Activated CD8-positive, alpha-beta T cell treated with anti-CD3 and anti-CD28 coated beads, Interleukin-2, amount 10 ng/mL, durations not matched to agents 7 days and 5 days (primary cell): ENCODE measurements at regions of chr2 and their contacts with region 1.

Region 1: DNA sequence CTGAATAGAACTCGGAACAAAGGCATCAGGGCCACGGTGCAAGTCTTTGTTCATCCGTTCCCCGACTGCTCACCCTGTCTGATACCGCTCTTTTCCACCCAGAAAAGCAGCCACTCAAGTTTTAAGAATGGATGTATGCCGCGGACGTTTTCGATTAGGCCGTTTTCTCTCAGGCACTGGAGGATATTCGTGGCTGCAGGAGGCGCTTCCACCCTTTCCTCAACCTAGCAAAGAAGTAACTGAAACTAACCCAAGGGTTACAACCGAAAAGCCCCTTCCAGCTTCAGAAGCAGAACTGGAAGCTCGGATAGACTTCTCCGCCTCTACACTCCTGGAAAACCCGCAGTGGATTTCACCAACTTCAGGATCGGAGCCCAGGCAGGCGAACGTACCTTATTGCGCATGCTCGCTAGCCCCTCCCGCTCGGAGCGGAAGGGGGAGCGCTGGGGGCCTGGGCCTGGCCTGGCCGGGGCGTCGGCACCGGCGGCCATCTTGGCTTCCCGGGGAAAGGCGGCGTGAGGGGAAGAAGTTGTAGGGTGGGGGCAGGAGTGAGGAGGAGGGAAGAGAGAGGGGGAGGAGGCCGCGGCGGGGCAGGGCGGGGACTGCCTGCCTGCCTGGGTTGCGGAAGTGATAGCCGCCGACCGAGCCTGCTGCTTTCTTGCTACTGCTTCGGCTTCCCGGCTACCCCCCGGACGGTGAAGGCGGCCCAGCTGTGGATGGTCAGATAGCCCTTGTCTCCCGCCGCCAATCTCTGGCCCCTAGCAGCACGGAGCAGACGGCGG is at the start of gene ACTR3:
- DNase-seq: peak; percentile 99
- ATAC-seq: peak; percentile 86
- H3K4me3 Mint-ChIP-seq: peak within 1 kb of the TSS; percentile 94
- H3K27ac Mint-ChIP-seq: peak within 1 kb of the TSS; percentile 97
- H3K4me1 Mint-ChIP-seq: peaks cover 68% of the 10 kb centered on the region
- H3K27me3 Mint-ChIP-seq: no peaks in the 10 kb centered on the region
- total RNA-seq, gene ACTR3: 599 to 604 TPM

Region 2: DNA sequence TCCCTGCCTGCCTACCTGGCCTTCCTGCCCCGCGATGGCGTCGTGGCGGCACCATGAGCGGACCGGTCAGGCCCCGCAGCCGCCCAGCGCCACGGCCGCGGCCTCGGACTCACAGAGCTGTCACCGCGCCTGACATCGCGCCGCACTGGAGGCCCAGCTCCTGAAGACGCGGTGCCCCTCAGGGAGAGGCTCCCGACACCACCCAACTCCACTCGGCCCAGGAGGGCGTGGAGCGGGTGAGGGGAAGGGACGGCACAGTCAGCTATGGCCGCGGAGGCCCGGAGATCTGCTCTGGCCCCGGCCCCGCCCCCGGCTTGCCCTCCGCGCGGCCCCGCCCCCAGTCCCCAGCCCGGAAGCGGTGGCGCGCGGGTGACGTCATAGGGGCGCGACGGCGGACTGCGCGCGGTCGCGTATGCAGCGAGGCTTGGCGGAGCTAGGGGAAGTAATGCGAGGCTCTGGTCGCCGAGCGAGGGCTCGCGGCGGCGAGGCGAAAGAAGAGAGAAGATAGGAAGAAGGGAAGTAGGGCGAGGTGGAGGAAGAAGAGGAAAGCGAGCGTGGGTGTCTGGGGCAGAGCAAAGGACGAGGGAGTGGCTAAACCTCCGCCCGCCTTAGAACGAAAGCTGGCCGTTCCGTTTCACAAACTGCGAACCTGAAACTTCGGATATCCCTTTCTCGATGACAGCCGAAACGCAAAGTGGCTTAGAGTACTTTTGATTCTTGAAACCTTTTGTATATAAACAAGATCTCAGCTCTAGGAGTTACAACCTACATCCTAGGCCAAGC is 133.1 kb before region 1 on chr2 and contains the start of gene SLC35F5:
- CTCF ChIA-PET with region 1: interaction called, 7 read pairs
- POLR2A ChIA-PET with region 1: interaction called, 47 read pairs
- DNase-seq: peak; percentile 92
- ATAC-seq: peak; percentile 89
- H3K4me3 Mint-ChIP-seq: peak within 1 kb of the TSS; percentile 93
- H3K27ac Mint-ChIP-seq: peak within 1 kb of the TSS; percentile 99
- H3K4me1 Mint-ChIP-seq: peaks cover 28% of the 10 kb centered on the region
- H3K27me3 Mint-ChIP-seq: peaks cover 2% of the 10 kb centered on the region
- total RNA-seq, gene SLC35F5: 16.5 to 17.1 TPM

Region 3: DNA sequence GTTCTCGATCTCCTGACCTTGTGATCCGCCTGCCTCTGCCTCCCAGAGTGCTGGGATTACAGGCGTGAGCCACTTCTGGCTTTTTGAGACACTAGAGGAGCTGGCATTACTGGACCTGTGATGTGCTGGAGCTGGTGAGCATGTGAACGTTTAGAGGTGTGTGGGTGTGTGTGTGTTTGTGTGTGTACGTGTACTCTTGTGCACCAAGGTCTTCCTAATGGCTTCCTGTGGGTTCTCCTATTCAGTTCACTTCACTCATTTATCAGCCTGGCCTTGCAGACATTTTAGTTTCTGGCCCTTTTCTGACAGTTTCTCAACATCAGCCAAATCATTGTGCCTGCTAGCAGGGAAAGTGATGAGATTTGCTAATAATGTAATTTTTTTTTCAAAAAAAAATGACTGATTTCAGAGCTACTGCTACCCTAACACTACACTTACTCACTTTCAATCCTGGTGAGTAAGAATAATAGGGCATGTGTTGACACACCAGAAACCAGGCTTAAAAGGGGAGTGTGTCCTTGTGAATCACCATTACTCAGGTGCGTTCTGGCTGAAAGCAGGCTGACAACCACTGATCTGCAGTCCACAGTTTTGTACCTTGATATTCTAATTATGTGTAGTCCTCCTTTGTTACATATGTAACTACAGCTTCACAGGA is 40.8 kb before region 1 on chr2:
- CTCF ChIA-PET with region 1: no interaction called
- POLR2A ChIA-PET with region 1: no interaction called
- DNase-seq: no peak
- ATAC-seq: no peak
- H3K4me3 Mint-ChIP-seq: no peak overlapping the region
- H3K27ac Mint-ChIP-seq: no peak overlapping the region
- H3K4me1 Mint-ChIP-seq: no peaks in the 10 kb centered on the region
- H3K27me3 Mint-ChIP-seq: no peaks in the 10 kb centered on the region

Region 4: DNA sequence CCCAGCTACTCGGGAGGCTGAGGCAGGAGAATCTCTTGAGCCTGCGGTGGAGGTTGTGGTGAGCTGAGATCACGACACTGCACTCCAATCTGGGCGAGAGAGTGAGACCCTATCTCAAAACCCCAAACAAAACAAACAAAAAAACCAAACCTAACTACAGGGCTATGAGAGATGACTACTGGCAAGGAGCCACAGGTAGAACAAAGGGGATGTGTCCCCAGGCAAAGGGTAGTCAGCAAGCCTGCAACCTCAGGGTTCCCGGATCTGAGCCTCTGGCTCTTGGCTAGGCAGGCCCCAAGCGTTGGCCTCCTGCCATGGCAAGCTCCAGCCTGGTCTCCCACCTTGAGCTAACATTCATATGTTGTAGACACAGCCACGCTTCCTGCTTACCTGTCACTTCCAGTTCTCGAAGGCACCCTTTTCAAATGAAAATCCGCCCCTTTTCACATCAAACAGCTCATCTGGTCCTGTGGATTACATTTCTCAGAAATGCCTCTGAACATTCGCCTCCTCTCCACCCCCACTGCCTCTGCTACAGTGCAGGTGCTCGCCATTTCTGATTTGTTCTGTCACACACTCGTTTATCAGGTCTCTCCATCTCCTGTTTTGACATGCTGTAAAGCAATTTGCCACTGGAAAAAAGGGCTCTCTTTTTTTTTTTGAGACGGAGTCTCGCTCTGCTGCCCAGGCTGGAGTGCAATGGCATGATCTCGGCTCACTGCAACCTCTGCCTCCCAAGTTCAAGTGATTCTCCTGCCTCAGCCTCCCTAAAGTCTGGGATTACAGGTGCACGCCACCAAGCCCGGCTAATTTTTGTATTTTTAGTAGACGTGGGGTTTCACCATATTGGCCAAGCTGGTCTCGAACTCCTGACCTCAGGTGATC is 12.9 kb before region 1 on chr2:
- CTCF ChIA-PET with region 1: interaction called, 10 read pairs
- POLR2A ChIA-PET with region 1: interaction called, 25 read pairs
- DNase-seq: peak; percentile 89
- ATAC-seq: peak; percentile 94
- H3K4me3 Mint-ChIP-seq: peak overlapping the region; percentile 52
- H3K27ac Mint-ChIP-seq: peak overlapping the region; percentile 89
- H3K4me1 Mint-ChIP-seq: peaks cover 67% of the 10 kb centered on the region
- H3K27me3 Mint-ChIP-seq: no peaks in the 10 kb centered on the region

Region 5: GRCh38 chr2:113907297-113907696 is 17.6 kb after region 1 on chr2:
- CTCF ChIA-PET with region 1: interaction called, 11 read pairs
- POLR2A ChIA-PET with region 1: interaction called, 5 read pairs
- DNase-seq: no peak
- ATAC-seq: no peak
- H3K4me3 Mint-ChIP-seq: no peak overlapping the region
- H3K27ac Mint-ChIP-seq: no peak overlapping the region
- H3K4me1 Mint-ChIP-seq: peaks cover 71% of the 10 kb centered on the region
- H3K27me3 Mint-ChIP-seq: no peaks in the 10 kb centered on the region